PC-3 (cell line): ENCODE measurements at regions of chr14 and their contacts with region 1.

Region 1: DNA sequence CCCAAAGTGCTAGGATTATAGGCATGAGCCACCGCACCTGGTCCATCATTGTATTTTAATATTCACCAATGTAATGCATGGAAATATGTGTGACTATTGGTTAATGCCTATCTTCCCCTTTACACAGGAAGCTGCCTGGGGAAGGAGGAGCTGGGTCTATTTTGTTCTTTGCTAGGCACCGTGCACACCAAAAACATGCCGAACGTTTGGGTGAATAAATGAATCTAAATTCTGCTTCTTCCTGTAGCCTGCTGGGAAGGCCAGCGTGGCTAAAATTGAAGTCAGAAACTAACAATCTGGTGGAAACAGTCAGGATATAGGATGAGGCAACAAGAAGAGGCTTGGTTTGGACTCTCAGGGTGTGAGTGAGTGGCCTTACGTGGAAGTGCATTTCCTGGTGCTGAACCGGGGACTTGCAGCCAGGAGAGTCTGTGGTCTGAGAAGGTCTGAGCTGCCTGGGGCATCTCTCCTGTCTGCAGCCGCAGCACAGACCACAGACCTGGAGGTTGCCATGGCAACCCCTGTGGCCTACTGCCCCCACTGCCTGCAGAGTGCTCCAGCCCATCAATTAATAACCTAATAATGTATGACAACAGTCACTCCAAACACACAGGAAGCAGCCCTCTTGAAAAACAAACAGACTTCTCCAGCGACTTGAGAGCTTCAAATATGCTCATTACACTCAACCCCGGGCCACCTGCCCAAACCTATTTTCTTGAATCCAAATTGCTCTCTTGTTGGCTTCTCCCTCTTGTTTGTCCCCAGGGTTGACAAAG is 5.5 kb upstream of the GPR68 start:
- DNase-seq: peak; percentile 75
- ATAC-seq: peak; percentile 71
- H3K4me3 ChIP-seq: no peak overlapping the region
- H3K27ac ChIP-seq: 0 out of 2 replicates have a peak overlapping the region, but pooled peaks have one; percentile 19
- H3K4me1 ChIP-seq: peaks cover 19% of the 10 kb centered on the region
- H3K27me3 ChIP-seq: no peaks in the 10 kb centered on the region
- CTCF ChIP-seq: no peak

Region 2: GRCh38 chr14:91228112-91229004 is 21.7 kb before region 1 on chr14:
- CTCF ChIA-PET with region 1: no interaction called
- POLR2A ChIA-PET with region 1: no interaction called
- intact Hi-C with region 1: loop called (anchors 1 kb)
- DNase-seq: peak; percentile 85
- ATAC-seq: peak; percentile 79
- H3K4me3 ChIP-seq: no peak overlapping the region
- H3K27ac ChIP-seq: peak overlapping the region; percentile 89
- H3K4me1 ChIP-seq: peaks cover 51% of the 10 kb centered on the region
- H3K27me3 ChIP-seq: no peaks in the 10 kb centered on the region
- CTCF ChIP-seq: no peak

Region 3: DNA sequence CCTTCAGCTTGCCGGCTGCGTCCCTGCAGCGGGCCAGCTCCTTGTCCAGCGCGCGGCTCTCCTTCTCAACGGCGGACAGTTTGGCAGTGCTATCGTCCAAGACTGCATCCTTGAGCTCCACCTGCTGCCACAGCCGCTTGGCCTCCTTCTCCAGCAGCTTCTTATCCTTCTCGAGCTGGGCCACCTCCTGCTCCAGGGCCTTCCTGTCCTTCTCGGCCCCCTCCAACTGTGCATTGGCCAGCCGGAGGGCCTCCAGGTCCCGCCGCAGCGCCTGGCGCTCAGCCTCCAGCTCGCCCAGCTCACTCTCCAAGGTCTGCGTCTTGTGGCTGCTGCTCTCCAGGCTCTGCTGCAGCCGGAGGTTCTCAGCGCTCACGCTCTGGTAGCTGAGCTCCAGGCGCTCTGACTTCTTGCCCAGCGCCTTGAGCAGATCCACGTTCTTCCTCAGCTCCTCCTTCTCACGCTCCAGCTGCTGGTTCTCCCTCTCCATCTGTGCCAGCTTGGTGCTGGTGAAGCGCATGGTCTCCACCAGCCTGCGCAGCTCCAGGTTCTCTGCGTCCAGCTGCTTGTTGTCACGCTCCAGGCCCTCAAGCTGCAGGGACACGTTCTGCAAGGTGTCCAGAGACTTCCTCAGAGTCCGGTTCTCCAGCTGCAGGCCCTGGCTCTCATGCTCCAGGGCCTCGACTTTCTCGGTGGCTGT is 63.3 kb after region 1 on chr14:
- CTCF ChIA-PET with region 1: interaction called, 10 read pairs
- POLR2A ChIA-PET with region 1: no interaction called
- intact Hi-C with region 1: no loop called
- DNase-seq: no peak
- ATAC-seq: no peak
- H3K4me3 ChIP-seq: no peak overlapping the region
- H3K27ac ChIP-seq: no peak overlapping the region
- H3K4me1 ChIP-seq: no peaks in the 10 kb centered on the region; the same call in 1 of the 2 replicates
- H3K27me3 ChIP-seq: no peaks in the 10 kb centered on the region
- CTCF ChIP-seq: no peak